WTC11 (cell line): ENCODE measurements at regions of chr1 and their contacts with region 1.

Region 1: GRCh38 chr1:47725992-47726855 is 271.0 kb downstream of the TRABD2B start:
- DNase-seq: peak; percentile 85
- ATAC-seq: peak; percentile 80
- H3K4me3 Mint-ChIP-seq: peak overlapping the region; percentile 39
- H3K27ac Mint-ChIP-seq: no peak overlapping the region
- H3K4me1 Mint-ChIP-seq: peaks cover 15% of the 10 kb centered on the region
- H3K27me3 Mint-ChIP-seq: peaks cover 71% of the 10 kb centered on the region
- CTCF ChIP-seq: peak; percentile 74

Region 2: DNA sequence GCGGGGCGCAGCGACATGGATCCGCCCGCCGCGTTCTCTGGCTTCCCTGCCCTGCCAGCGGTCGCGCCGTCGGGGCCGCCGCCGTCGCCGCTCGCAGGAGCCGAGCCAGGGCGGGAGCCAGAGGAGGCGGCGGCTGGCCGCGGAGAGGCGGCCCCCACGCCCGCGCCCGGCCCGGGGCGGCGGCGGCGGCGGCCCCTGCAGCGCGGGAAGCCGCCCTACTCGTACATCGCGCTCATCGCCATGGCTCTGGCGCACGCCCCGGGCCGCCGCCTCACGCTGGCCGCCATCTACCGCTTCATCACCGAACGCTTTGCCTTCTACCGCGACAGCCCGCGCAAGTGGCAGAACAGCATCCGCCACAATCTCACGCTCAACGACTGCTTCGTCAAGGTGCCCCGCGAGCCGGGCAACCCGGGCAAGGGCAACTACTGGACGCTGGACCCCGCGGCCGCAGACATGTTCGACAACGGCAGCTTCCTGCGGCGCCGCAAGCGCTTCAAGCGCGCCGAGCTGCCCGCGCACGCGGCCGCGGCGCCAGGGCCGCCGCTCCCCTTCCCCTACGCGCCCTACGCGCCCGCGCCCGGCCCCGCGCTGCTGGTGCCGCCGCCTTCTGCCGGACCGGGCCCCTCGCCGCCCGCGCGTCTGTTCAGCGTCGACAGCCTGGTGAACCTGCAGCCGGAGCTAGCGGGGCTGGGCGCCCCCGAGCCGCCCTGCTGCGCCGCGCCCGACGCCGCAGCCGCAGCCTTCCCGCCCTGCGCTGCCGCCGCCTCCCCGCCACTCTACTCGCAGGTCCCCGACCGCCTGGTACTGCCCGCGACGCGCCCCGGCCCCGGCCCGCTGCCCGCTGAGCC is 309.7 kb before region 1 on chr1:
- CTCF ChIA-PET with region 1: interaction called, 11 read pairs
- POLR2A ChIA-PET with region 1: no interaction called
- DNase-seq: no peak
- ATAC-seq: peak; percentile 46
- H3K4me3 Mint-ChIP-seq: peak overlapping the region; percentile 68
- H3K27ac Mint-ChIP-seq: no peak overlapping the region
- H3K4me1 Mint-ChIP-seq: peaks cover 8% of the 10 kb centered on the region
- H3K27me3 Mint-ChIP-seq: peaks cover 83% of the 10 kb centered on the region
- CTCF ChIP-seq: no peak

Region 3: DNA sequence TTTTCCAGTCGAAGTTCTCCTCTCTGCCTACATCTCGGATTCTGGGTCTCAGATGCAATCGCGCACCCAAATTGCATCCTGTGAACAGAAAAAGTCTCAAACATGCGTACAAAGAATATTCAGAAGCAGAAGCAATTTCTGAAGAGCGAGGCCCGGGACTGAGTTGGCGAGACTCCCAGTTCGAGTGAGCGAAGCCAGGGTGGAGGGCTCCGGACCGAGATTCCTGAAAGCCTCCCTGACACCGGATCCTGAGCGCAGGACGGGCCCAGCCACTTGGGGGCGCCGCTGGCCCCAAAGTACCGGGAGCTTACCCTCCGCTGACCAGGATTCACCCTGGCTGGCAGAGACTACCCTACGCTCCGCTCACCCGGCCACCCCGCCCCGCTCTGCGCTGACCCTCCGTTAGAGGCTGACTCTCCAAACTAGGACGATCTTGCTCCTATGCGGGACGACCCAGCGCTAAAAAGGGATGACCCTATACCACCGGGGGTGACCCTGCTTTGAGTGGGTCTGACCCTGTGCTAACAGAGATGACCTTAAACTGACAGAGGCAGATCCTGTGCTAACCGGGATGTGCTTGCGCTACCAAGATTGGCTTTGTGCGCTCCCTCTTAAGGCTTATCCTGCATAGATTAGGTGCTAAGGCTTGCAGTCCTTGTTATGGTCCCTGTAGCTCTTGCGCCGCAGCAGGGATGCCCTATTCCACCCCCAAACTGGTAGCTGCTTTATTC is 276.2 kb before region 1 on chr1:
- CTCF ChIA-PET with region 1: interaction called, 46 read pairs
- POLR2A ChIA-PET with region 1: no interaction called
- DNase-seq: peak; percentile 89
- ATAC-seq: peak; percentile 91
- H3K4me3 Mint-ChIP-seq: peak overlapping the region; percentile 58
- H3K27ac Mint-ChIP-seq: no peak overlapping the region
- H3K4me1 Mint-ChIP-seq: peaks cover 36% of the 10 kb centered on the region
- H3K27me3 Mint-ChIP-seq: no peaks in the 10 kb centered on the region; the same call in none of the 2 replicates
- CTCF ChIP-seq: peak; percentile 58

Region 4: DNA sequence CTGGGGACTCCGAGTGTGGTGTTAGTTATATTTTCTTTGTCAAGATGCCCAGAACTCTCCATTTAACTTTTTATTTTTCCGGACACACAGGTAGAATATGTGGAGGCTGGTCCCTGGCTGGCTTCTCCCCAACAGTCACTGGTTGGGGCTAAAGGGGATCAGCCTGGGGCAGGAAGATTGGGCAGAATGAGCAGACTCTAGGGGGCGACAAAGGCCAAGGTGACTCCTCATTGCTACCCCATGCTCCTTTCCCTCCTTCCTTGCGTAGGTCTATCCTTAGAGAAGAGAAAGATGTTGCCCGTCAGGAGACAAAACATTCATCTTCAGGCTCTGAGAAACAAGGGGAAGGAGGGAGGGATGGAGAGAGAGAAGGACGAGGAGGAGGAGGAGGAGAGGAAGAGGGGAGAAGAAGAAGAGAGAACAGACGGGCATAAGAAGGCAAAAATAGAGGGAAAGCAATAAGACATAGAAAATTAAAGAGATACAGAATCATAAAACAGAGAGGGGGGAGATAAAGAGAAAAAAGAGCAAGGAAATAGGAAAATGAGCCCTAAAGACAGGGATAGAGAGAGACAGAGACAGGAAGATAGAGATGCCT is 198.5 kb before region 1 on chr1:
- CTCF ChIA-PET with region 1: interaction called, 36 read pairs
- POLR2A ChIA-PET with region 1: no interaction called
- DNase-seq: peak; percentile 74
- ATAC-seq: peak; percentile 72
- H3K4me3 Mint-ChIP-seq: no peak overlapping the region
- H3K27ac Mint-ChIP-seq: no peak overlapping the region
- H3K4me1 Mint-ChIP-seq: peaks cover 37% of the 10 kb centered on the region
- H3K27me3 Mint-ChIP-seq: peaks cover 36% of the 10 kb centered on the region
- CTCF ChIP-seq: peak; percentile 64

Region 5: GRCh38 chr1:47644212-47644573 is 82.0 kb before region 1 on chr1:
- CTCF ChIA-PET with region 1: interaction called, 17 read pairs
- POLR2A ChIA-PET with region 1: no interaction called
- DNase-seq: no peak
- ATAC-seq: no peak
- H3K4me3 Mint-ChIP-seq: no peak overlapping the region
- H3K27ac Mint-ChIP-seq: no peak overlapping the region
- H3K4me1 Mint-ChIP-seq: peaks cover 6% of the 10 kb centered on the region; the same call in 1 of the 2 replicates
- H3K27me3 Mint-ChIP-seq: peaks cover 5% of the 10 kb centered on the region; the same call in 1 of the 2 replicates
- CTCF ChIP-seq: no peak

Region 6: GRCh38 chr1:47738560-47739182 is 12.4 kb after region 1 on chr1:
- CTCF ChIA-PET with region 1: interaction called, 25 read pairs
- POLR2A ChIA-PET with region 1: no interaction called
- DNase-seq: peak; percentile 79
- ATAC-seq: peak; percentile 99
- H3K4me3 Mint-ChIP-seq: no peak overlapping the region
- H3K27ac Mint-ChIP-seq: no peak overlapping the region
- H3K4me1 Mint-ChIP-seq: no peaks in the 10 kb centered on the region
- H3K27me3 Mint-ChIP-seq: peaks cover 50% of the 10 kb centered on the region
- CTCF ChIP-seq: peak; percentile 81